PC-9 (cell line): ENCODE measurements at regions of chr6 and their contacts with region 1.

Region 1: GRCh38 chr6:28399350-28400121 is at the start of gene ZSCAN12:
- DNase-seq: peak; percentile 75 to 84
- H3K4me3 ChIP-seq: peak within 1 kb of the TSS; percentile 74
- H3K27ac ChIP-seq: peak within 1 kb of the TSS; percentile 43
- H3K4me1 ChIP-seq: peaks cover 30% of the 10 kb centered on the region
- H3K27me3 ChIP-seq: no peaks in the 10 kb centered on the region
- CTCF ChIP-seq: peak; percentile 43
- total RNA-seq, gene ZSCAN12: 10.9 and 11.2 TPM in 2 replicates

Region 2: DNA sequence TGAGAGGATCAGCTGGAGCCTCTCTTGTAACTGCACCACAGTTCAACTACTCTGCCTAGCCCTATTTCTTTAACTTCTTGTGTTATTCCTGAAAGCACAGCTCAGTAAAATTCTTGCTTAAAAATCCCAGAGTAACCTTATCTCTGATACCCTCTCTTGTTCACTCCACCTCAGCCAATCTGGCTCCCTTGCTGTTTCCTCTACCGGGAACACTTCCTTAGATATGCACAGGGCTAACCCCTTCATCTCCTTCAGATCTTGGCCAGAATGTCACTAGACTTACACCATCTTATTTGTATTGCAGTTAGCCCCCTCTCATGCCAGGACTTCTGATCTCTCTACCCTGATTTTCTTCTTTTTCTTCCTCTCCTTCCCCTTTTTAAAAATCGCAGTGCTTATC is 52.4 kb before region 1 on chr6:
- CTCF ChIA-PET with region 1: no interaction called
- POLR2A ChIA-PET with region 1: no interaction called
- intact Hi-C with region 1: no loop called
- DNase-seq: no peak
- H3K4me3 ChIP-seq: no peak overlapping the region
- H3K27ac ChIP-seq: no peak overlapping the region
- H3K4me1 ChIP-seq: peaks cover 17% of the 10 kb centered on the region
- H3K27me3 ChIP-seq: peaks cover 11% of the 10 kb centered on the region
- CTCF ChIP-seq: no peak

Region 3: GRCh38 chr6:28383235-28384142 is 16.0 kb before region 1 on chr6:
- CTCF ChIA-PET with region 1: interaction called, 3 read pairs
- POLR2A ChIA-PET with region 1: no interaction called
- intact Hi-C with region 1: loop called (anchors 1 kb)
- DNase-seq: peak; percentile 74 to 92
- H3K4me3 ChIP-seq: peak overlapping the region; percentile 64
- H3K27ac ChIP-seq: no peak overlapping the region
- H3K4me1 ChIP-seq: peaks cover 8% of the 10 kb centered on the region; the same call in 1 of the 2 replicates
- H3K27me3 ChIP-seq: no peaks in the 10 kb centered on the region
- CTCF ChIP-seq: peak; percentile 68

Region 4: GRCh38 chr6:28443112-28443773 is 43.7 kb after region 1 on chr6 and contains the start of gene ZSCAN23:
- CTCF ChIA-PET with region 1: interaction called, 5 read pairs
- POLR2A ChIA-PET with region 1: no interaction called
- intact Hi-C with region 1: loop called (anchors 2 kb)
- DNase-seq: peak; percentile 78
- H3K4me3 ChIP-seq: peak within 1 kb of the TSS; percentile 83
- H3K27ac ChIP-seq: no peak within 1 kb of the TSS
- H3K4me1 ChIP-seq: peaks cover 14% of the 10 kb centered on the region
- H3K27me3 ChIP-seq: no peaks in the 10 kb centered on the region
- CTCF ChIP-seq: no peak
- total RNA-seq, gene ZSCAN23: 9.1 and 12.0 TPM in 2 replicates